ENCODE measurements at regions of chr22 and their contacts with region 1.

Region 1: GRCh38 chr22:31080848-31081649 is at the start of gene SMTN:
- DNase-seq: peak; percentile 83 to 96
- H3K4me3 ChIP-seq: peak within 1 kb of the TSS; percentile 59
- H3K4me1 ChIP-seq: peaks cover 22% of the 10 kb centered on the region
- H3K27me3 ChIP-seq: no peaks in the 10 kb centered on the region

Region 2: DNA sequence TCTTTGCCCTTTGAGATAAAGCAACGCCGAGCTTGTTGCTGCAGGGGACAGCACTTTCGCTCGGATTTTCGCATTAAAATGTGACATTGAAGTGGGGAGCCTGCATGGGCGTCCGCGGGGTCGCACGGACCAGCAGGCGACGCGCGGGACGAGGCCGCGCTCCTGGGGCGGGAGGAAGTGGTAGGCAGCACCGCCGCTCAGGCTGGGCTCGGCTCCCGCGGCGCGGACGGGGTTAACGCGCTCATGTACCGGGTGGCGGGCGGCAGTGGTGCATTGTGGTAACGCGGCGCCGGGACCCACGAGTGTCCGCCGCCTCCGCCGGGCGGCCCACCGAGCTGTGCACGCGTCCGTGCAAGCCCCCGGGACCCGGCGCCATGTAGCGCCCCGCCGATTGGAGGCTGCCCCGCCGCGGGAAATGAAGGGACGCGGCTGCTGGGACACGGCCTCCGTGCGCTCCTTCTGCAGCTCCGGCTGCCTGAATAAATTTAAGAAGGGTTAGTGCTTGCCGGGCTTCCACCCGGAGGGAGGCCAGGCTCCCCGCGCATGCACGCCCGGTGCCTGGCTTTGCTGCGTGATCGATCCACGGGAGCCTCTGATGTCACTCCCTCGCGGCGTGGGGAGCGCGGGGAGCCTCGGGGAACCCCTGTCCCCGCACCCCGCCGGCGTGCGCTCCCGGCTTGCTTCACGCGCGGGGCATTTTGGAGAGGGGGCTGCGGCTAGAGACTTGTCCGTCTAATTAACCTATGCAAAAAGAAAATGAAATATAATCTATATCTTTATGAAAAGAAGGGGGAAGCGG is 258.6 kb before region 1 on chr22:
- in situ Hi-C with region 1: no loop called
- DNase-seq: no peak
- H3K4me3 ChIP-seq: no peak overlapping the region
- H3K4me1 ChIP-seq: no peaks in the 10 kb centered on the region
- H3K27me3 ChIP-seq: peaks cover 23% of the 10 kb centered on the region

Region 3: GRCh38 chr22:30947816-30948454 is 133.1 kb before region 1 on chr22:
- in situ Hi-C with region 1: loop called (anchors 10 kb)
- DNase-seq: peak in 1 of 2 experiments; percentile 33
- H3K4me3 ChIP-seq: no peak overlapping the region
- H3K4me1 ChIP-seq: no peaks in the 10 kb centered on the region
- H3K27me3 ChIP-seq: no peaks in the 10 kb centered on the region

Measured in HAP-1 (cell line).